Psoas muscle (tissue), 8 donors: ENCODE measurements at regions of chr4 and their contacts with region 1.

Region 1: GRCh38 chr4:22410645-22411247 is 105.1 kb downstream of the ADGRA3 start:
- DNase-seq: no peak
- ATAC-seq: peak in 1 of 4 donors; percentile 61
- H3K4me3 ChIP-seq: no peak overlapping the region
- H3K27ac ChIP-seq: no peak overlapping the region
- H3K4me1 ChIP-seq: no peaks in the 10 kb centered on the region
- H3K27me3 ChIP-seq: no peaks in the 10 kb centered on the region
- CTCF ChIP-seq: peak; percentile 63

Region 2: GRCh38 chr4:21507439-21507838 is 903.3 kb before region 1 on chr4:
- intact Hi-C with region 1: no loop called
- DNase-seq: no peak
- ATAC-seq: no peak
- H3K4me3 ChIP-seq: no peak overlapping the region
- H3K27ac ChIP-seq: no peak overlapping the region
- H3K4me1 ChIP-seq: no peaks in the 10 kb centered on the region
- H3K27me3 ChIP-seq: no peaks in the 10 kb centered on the region
- CTCF ChIP-seq: no peak

Region 3: DNA sequence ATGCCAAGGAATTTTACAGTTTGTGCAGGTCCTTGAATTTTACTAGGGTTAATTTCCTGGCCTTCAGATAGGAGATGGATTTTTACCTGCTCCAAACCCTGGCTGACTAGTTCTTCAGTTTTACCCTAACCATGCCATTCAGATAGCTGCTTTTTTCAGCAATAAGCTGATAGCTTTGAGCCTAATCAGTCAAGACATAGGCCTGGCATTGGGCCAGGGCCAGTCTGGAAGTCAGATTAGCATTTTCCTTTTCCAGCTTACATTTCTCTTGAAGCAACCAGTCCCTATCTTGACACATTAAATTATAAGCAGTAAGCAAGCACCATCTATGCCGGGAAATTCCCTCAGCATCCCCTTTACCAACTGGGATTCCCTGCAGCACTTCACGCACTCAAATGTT is 72.0 kb before region 1 on chr4:
- intact Hi-C with region 1: no loop called
- DNase-seq: no peak
- ATAC-seq: no peak
- H3K4me3 ChIP-seq: no peak overlapping the region
- H3K27ac ChIP-seq: no peak overlapping the region
- H3K4me1 ChIP-seq: no peaks in the 10 kb centered on the region
- H3K27me3 ChIP-seq: no peaks in the 10 kb centered on the region
- CTCF ChIP-seq: no peak

Region 4: DNA sequence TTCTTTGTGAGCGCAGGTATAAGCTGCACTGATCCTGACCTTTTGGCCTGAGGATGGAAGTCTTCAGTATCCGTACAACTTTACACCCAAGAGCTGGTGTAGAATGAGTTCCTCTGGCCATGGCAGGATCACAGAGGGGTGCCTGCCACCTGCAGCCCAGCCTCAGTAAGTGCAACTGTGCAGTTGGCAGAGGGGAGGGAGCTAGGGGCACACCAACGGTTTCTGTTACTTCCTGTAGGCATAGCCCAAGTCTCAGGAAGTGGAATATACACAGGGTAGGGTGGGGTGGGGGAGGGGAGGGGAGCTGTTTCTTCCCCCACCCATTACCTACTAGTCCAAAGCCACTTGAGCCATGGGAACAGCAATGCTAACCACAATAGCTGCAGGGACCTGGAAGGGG is 196.6 kb after region 1 on chr4:
- intact Hi-C with region 1: loop called (anchors 2 kb)
- DNase-seq: peak; percentile 29 to 67
- ATAC-seq: peak; percentile 95 to 100 (median 97)
- H3K4me3 ChIP-seq: no peak overlapping the region
- H3K27ac ChIP-seq: no peak overlapping the region
- H3K4me1 ChIP-seq: no peaks in the 10 kb centered on the region
- H3K27me3 ChIP-seq: no peaks in the 10 kb centered on the region
- CTCF ChIP-seq: peak; percentile 65

Region 5: DNA sequence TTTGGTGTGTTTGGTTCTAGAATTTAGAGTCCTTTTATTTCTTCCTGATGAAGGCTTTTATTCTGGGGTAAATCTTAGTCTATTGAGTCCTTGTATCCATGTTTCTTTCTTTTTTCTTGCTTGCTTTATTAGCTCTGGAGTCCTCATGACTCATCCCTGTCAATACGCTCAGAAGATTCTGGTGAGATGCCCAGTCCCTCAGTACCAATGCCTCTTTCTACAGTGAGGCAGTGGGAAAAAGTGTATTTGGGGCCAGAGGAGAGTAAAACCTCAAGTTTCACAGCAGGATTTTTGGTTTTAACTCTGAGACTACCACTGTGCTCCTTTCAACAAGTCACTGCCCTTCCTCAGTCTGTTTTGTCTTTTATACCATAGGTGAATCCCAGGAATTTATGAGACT is 650.0 kb after region 1 on chr4:
- intact Hi-C with region 1: no loop called
- DNase-seq: no peak
- ATAC-seq: no peak
- H3K4me3 ChIP-seq: no peak overlapping the region
- H3K27ac ChIP-seq: no peak overlapping the region
- H3K4me1 ChIP-seq: no peaks in the 10 kb centered on the region
- H3K27me3 ChIP-seq: no peaks in the 10 kb centered on the region
- CTCF ChIP-seq: no peak